Activated CD8-positive, alpha-beta memory T cell treated with anti-CD3 and anti-CD28 coated beads, Interleukin-2, amount 10 ng/mL, durations not matched to agents 7 days and 5 days (primary cell): ENCODE measurements at regions of chr3 and their contacts with region 1.

Region 1: DNA sequence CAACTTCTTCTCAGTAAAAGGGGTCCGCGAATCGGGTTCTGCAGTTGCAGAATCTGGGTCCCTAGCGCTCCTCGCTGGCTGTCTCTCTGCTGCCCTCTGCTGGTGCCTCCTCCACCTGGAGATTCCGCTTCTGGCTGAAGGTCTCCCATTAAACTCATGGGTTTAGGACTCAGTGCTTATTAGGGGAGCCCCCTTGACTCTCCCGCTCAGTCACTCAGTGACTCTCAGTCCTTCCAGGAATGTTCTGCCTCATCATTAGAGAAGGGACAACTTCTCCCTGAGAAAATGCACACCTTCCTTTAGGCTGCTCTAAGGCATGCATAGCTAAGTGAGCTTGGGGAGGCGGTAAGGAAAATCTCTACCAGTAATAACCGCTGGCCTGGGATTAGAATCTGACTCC is 7.1 kb downstream of the CPN2 start:
- DNase-seq: peak; percentile 74
- ATAC-seq: peak; percentile 69
- H3K4me3 Mint-ChIP-seq: no peak overlapping the region
- H3K27ac Mint-ChIP-seq: no peak overlapping the region
- H3K4me1 Mint-ChIP-seq: no peaks in the 10 kb centered on the region
- H3K27me3 Mint-ChIP-seq: peaks cover 24% of the 10 kb centered on the region

Region 2: GRCh38 chr3:194176274-194176991 is 167.6 kb before region 1 on chr3:
- CTCF ChIA-PET with region 1: no interaction called
- DNase-seq: no peak
- ATAC-seq: no peak
- H3K4me3 Mint-ChIP-seq: no peak overlapping the region
- H3K27ac Mint-ChIP-seq: no peak overlapping the region
- H3K4me1 Mint-ChIP-seq: no peaks in the 10 kb centered on the region
- H3K27me3 Mint-ChIP-seq: peaks cover 21% of the 10 kb centered on the region

Region 3: GRCh38 chr3:194224471-194225415 is 119.3 kb before region 1 on chr3:
- CTCF ChIA-PET with region 1: no interaction called
- DNase-seq: no peak
- ATAC-seq: no peak
- H3K4me3 Mint-ChIP-seq: no peak overlapping the region
- H3K27ac Mint-ChIP-seq: no peak overlapping the region
- H3K4me1 Mint-ChIP-seq: peaks cover 9% of the 10 kb centered on the region
- H3K27me3 Mint-ChIP-seq: peaks cover 68% of the 10 kb centered on the region

Region 4: GRCh38 chr3:194333212-194333980 is 10.6 kb before region 1 on chr3:
- CTCF ChIA-PET with region 1: interaction called, 26 read pairs
- DNase-seq: peak; percentile 90
- ATAC-seq: peak; percentile 98
- H3K4me3 Mint-ChIP-seq: peak overlapping the region; percentile 56
- H3K27ac Mint-ChIP-seq: no peak overlapping the region
- H3K4me1 Mint-ChIP-seq: peaks cover 11% of the 10 kb centered on the region
- H3K27me3 Mint-ChIP-seq: peaks cover 35% of the 10 kb centered on the region

Region 5: GRCh38 chr3:194355379-194355778 is 11.4 kb after region 1 on chr3:
- CTCF ChIA-PET with region 1: interaction called, 11 read pairs
- DNase-seq: no peak
- ATAC-seq: no peak
- H3K4me3 Mint-ChIP-seq: no peak overlapping the region
- H3K27ac Mint-ChIP-seq: no peak overlapping the region
- H3K4me1 Mint-ChIP-seq: no peaks in the 10 kb centered on the region
- H3K27me3 Mint-ChIP-seq: peaks cover 8% of the 10 kb centered on the region

Region 6: DNA sequence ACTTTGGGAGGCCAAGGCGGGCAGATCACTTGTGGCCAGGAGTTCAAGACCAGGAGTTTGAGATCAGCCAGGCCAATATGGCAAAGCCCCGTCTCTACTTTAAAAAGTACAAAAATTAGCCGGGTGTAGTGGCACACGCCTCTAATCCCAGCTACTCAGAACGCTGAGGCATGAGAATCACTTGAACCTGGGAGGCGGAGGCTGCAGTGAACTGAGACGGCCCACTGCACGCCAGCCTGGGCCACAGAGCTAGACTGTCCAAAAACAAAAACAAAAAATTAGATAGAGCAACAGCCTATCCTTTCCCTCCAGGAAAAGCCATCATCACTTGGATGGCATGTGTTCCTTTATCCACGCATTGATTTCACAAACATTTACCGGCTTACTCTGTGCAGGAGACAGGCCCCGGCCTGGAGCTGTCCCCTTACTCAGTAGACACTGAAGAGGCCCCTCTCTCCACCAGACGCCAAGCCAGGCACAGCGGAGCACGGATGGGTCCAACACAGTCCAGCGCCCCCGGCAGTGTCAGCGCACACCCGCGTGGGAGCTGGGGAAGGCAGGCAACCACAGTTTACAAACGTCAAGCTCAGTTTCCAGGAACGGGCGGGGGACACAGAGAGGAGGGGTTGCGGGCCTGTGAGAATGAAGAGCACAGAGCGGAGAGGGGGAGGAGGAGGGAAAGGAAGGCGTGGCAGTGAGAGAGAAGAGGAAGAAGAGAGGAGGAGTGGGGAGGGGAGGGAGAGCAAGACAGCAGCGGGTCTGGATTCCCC is 52.0 kb after region 1 on chr3:
- CTCF ChIA-PET with region 1: interaction called, 19 read pairs
- DNase-seq: peak; percentile 58
- ATAC-seq: peak; percentile 44
- H3K4me3 Mint-ChIP-seq: peak overlapping the region; percentile 39
- H3K27ac Mint-ChIP-seq: no peak overlapping the region
- H3K4me1 Mint-ChIP-seq: peaks cover 51% of the 10 kb centered on the region
- H3K27me3 Mint-ChIP-seq: peaks cover 61% of the 10 kb centered on the region

Region 7: DNA sequence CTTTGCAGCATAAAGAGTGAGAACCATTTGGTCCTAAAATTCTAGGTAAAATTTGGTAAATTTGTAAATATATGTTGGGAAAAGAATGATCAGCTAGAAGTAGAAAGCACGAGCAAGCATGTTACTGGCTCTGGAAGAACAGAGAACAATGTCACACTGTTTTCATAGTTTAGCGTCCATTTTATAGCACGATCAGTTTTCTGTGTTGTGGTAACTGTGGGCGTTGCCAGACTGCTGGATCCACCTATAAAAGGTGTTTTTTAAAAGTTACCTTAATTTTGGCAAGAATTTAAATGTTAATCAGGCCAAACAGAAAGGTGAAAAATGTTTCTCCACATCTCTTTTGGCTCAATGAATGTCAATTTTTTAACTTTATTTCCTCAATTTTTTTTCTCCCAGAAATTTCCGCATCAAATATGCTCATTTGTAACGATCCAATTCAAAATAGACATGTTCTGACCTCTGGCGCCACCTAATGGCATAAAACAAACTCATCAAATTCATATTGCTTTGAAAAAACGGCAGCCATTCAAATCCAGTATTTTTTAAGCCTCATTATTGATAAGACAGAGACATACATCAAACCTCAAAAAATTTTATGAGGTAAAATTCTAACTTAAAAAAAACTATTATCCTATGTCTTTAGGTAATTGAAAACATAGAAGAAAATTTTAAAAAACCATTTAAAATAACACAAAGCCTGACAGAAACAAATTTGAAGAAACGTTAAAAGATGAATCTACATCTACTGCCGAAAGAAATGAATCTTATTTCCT is 60.5 kb after region 1 on chr3:
- CTCF ChIA-PET with region 1: interaction called, 24 read pairs
- DNase-seq: no peak
- ATAC-seq: no peak
- H3K4me3 Mint-ChIP-seq: no peak overlapping the region
- H3K27ac Mint-ChIP-seq: no peak overlapping the region
- H3K4me1 Mint-ChIP-seq: peaks cover 7% of the 10 kb centered on the region
- H3K27me3 Mint-ChIP-seq: peaks cover 5% of the 10 kb centered on the region

Region 8: GRCh38 chr3:194867270-194867991 is 523.4 kb after region 1 on chr3:
- CTCF ChIA-PET with region 1: no interaction called
- DNase-seq: no peak
- ATAC-seq: no peak
- H3K4me3 Mint-ChIP-seq: no peak overlapping the region
- H3K27ac Mint-ChIP-seq: no peak overlapping the region
- H3K4me1 Mint-ChIP-seq: no peaks in the 10 kb centered on the region
- H3K27me3 Mint-ChIP-seq: peaks cover 28% of the 10 kb centered on the region